ENCODE measurements at regions of chr6 and their contacts with region 1.

Region 1: DNA sequence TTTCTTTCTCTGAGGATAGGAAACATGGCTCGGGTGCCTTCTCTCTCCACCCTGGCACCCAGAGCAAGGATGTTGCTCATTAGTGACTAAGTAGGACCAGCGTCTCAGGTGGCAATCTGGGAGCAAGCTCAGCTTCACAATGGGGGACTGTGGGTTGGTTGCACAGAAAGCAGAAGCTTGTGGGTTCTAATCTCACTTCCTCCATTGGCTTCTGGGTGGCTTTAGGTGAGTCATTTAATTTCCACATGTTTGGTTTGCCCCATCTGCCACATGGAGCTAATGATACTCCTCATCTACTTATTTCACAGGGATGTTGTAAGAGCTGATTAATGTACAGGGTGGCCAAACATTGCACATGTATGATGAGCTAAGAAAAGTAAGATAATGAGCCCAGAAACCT is 54.8 kb upstream of the AKIRIN2 start:
- DNase-seq: peak; percentile 86
- ATAC-seq: peak; percentile 91
- H3K4me3 ChIP-seq: no peak overlapping the region
- H3K4me3 Mint-ChIP-seq: peak overlapping the region; percentile 62
- H3K27ac ChIP-seq: peak overlapping the region; percentile 9 to 43
- H3K27ac Mint-ChIP-seq: peak overlapping the region; percentile 89
- H3K4me1 ChIP-seq: peaks cover 37 to 40% of the 10 kb centered on the region in 2 donors
- H3K4me1 Mint-ChIP-seq: peaks cover 36% of the 10 kb centered on the region
- H3K27me3 ChIP-seq: no peaks in the 10 kb centered on the region
- H3K27me3 Mint-ChIP-seq: no peaks in the 10 kb centered on the region
- CTCF ChIP-seq: no peak

Region 2: GRCh38 chr6:87742106-87742505 is 14.8 kb before region 1 on chr6:
- CTCF ChIA-PET with region 1: interaction called, 7 read pairs
- POLR2A ChIA-PET with region 1: interaction called, 7 read pairs
- intact Hi-C with region 1: loop called (anchors 2 kb)
- DNase-seq: peak; percentile 80
- ATAC-seq: peak; percentile 90
- H3K4me3 ChIP-seq: no peak overlapping the region
- H3K4me3 Mint-ChIP-seq: peak overlapping the region; percentile 52
- H3K27ac ChIP-seq: peak overlapping the region; percentile 30 to 62
- H3K27ac Mint-ChIP-seq: peak overlapping the region; percentile 91
- H3K4me1 ChIP-seq: peaks cover 14 to 21% of the 10 kb centered on the region in 2 donors
- H3K4me1 Mint-ChIP-seq: peaks cover 24% of the 10 kb centered on the region
- H3K27me3 ChIP-seq: no peaks in the 10 kb centered on the region
- H3K27me3 Mint-ChIP-seq: no peaks in the 10 kb centered on the region
- CTCF ChIP-seq: no peak

Region 3: DNA sequence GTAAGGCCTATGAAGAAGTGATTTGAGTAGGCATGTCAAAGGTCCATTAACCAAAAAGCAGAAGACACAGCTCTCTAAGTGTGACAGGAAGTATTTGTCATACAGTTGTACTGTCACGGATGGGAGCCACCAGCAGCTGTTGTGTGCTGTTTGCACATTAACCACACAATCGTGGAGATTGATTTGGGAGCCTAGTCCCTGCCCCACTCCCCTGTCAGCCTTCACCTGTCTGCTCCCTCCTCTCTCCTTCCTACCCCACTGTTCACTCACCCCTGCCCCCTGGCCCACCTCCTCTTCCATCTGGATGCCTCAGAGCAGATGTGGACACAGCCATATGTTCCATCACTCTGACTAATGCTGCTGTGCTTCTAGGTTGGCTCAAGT is 166.1 kb after region 1 on chr6:
- CTCF ChIA-PET with region 1: no interaction called
- POLR2A ChIA-PET with region 1: no interaction called
- intact Hi-C with region 1: loop called (anchors 2 kb)
- DNase-seq: peak; percentile 86
- ATAC-seq: peak; percentile 77
- H3K4me3 ChIP-seq: no peak overlapping the region
- H3K4me3 Mint-ChIP-seq: peak overlapping the region; percentile 63
- H3K27ac ChIP-seq: peak overlapping the region; percentile 63 to 91
- H3K27ac Mint-ChIP-seq: peak overlapping the region; percentile 92
- H3K4me1 ChIP-seq: peaks cover 90% of the 10 kb centered on the region in 2 donors
- H3K4me1 Mint-ChIP-seq: peaks cover 91% of the 10 kb centered on the region
- H3K27me3 ChIP-seq: no peaks in the 10 kb centered on the region
- H3K27me3 Mint-ChIP-seq: no peaks in the 10 kb centered on the region
- CTCF ChIP-seq: no peak

Region 4: DNA sequence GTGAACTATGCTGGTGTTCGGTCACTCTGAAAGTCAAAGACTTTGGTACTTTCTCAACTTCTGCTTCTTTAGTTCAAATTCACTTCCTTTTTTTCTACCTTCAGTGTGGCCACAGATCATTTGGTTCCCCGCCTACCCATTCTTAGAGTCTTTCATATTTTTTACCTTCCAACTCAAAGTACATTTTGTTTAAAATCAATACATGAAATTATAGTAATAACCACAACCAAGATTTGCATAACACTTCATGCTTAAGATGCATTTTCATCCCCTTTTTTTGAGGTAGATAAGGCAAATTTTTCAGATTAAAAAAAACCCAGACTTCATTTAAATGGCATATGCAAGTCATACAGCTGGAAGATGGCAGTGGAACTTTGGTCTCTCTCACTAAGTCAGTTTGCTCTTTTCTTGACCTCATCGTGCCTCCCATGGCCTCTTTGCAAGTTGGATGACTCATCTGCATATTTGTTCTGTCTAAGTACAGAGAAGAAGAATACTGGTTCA is 421.2 kb after region 1 on chr6:
- CTCF ChIA-PET with region 1: interaction called, 4 read pairs
- POLR2A ChIA-PET with region 1: no interaction called
- intact Hi-C with region 1: loop called (anchors 2 kb)
- DNase-seq: peak; percentile 79
- ATAC-seq: peak; percentile 61
- H3K4me3 ChIP-seq: peak overlapping the region in 1 of 5 experiments; percentile 45
- H3K4me3 Mint-ChIP-seq: peak overlapping the region; percentile 57
- H3K27ac ChIP-seq: peak overlapping the region; percentile 61 to 85
- H3K27ac Mint-ChIP-seq: peak overlapping the region; percentile 81
- H3K4me1 ChIP-seq: peaks cover 52 to 63% of the 10 kb centered on the region in 2 donors
- H3K4me1 Mint-ChIP-seq: peaks cover 58% of the 10 kb centered on the region
- H3K27me3 ChIP-seq: no peaks in the 10 kb centered on the region
- H3K27me3 Mint-ChIP-seq: no peaks in the 10 kb centered on the region
- CTCF ChIP-seq: no peak

Region 5: DNA sequence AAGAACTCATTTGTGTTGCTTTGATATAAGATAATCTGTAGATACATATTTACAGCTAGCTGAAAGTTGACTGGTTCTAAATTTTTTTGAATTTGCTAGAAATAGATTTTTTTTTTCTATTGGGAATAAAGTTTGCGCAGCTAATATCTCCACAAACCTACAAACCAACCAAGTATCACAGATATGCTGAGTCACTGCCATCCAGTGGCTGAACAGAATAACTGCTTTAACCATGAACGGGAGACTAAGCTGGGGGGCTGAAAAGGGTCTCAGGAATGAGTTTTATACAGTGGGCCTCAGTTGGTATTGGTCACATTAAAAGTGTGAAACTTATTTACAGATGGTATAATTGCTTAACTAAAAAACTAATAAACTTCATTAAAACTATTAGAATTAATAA is 736.0 kb after region 1 on chr6:
- CTCF ChIA-PET with region 1: no interaction called
- POLR2A ChIA-PET with region 1: no interaction called
- intact Hi-C with region 1: no loop called
- DNase-seq: no peak
- ATAC-seq: no peak
- H3K4me3 ChIP-seq: no peak overlapping the region
- H3K4me3 Mint-ChIP-seq: no peak overlapping the region
- H3K27ac ChIP-seq: no peak overlapping the region
- H3K27ac Mint-ChIP-seq: no peak overlapping the region
- H3K4me1 ChIP-seq: peaks cover 17 to 20% of the 10 kb centered on the region in 2 donors
- H3K4me1 Mint-ChIP-seq: peaks cover 22% of the 10 kb centered on the region
- H3K27me3 ChIP-seq: no peaks in the 10 kb centered on the region
- H3K27me3 Mint-ChIP-seq: no peaks in the 10 kb centered on the region
- CTCF ChIP-seq: no peak